WTC11 (cell line): ENCODE measurements at regions of chr3 and their contacts with region 1.

Region 1: GRCh38 chr3:14548321-14548729 is 8.2 kb upstream of the GRIP2 start:
- DNase-seq: peak; percentile 73
- ATAC-seq: peak; percentile 91
- H3K4me3 Mint-ChIP-seq: no peak overlapping the region
- H3K27ac Mint-ChIP-seq: no peak overlapping the region
- H3K4me1 Mint-ChIP-seq: peaks cover 5% of the 10 kb centered on the region; the same call in 1 of the 2 replicates
- H3K27me3 Mint-ChIP-seq: no peaks in the 10 kb centered on the region; the same call in 1 of the 2 replicates
- CTCF ChIP-seq: peak; percentile 56; the same call in 1 of the 2 replicates

Region 2: DNA sequence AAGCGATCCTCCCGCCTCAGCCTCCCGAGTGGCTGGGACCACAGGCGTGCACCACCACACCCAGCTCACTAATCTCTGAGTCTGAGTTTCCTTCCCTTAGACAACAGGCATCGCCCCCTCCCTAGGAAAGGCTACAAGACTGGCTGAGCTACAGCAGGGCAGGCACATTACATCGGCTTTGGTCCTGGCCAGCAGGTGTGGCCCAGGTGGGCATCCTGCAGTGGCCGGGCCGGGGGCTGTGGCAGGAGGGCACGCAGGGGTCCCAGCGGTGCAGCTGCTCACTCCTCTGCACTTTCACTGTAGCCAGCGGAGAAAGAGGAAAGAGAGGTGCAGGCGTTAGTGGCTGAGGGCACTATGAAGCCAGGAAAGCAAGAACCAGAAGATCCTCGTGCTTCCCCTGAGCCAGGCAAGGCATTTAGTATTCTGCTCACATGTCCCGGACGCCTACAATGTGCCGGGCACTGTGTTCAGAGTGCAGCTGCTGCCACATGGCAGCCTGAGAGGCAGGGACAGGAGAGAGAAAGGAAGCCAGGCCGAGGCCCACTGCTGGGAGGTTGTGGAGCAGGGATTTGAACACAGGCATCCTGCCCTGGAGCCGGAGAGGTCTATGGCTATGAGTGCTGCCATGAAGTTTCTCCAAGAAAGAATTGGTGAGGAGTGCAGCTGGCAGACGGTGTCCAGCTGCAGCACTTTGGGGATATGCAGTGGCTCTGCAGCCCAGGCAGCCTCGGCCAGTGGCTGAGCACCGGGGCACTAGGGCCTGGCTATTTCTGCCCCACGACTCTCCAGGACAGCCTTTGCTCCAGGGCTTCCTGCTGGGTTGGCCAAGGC is 30.5 kb before region 1 on chr3:
- CTCF ChIA-PET with region 1: interaction called, 36 read pairs
- POLR2A ChIA-PET with region 1: no interaction called
- DNase-seq: no peak
- ATAC-seq: no peak
- H3K4me3 Mint-ChIP-seq: no peak overlapping the region
- H3K27ac Mint-ChIP-seq: no peak overlapping the region
- H3K4me1 Mint-ChIP-seq: no peaks in the 10 kb centered on the region
- H3K27me3 Mint-ChIP-seq: no peaks in the 10 kb centered on the region
- CTCF ChIP-seq: no peak

Region 3: DNA sequence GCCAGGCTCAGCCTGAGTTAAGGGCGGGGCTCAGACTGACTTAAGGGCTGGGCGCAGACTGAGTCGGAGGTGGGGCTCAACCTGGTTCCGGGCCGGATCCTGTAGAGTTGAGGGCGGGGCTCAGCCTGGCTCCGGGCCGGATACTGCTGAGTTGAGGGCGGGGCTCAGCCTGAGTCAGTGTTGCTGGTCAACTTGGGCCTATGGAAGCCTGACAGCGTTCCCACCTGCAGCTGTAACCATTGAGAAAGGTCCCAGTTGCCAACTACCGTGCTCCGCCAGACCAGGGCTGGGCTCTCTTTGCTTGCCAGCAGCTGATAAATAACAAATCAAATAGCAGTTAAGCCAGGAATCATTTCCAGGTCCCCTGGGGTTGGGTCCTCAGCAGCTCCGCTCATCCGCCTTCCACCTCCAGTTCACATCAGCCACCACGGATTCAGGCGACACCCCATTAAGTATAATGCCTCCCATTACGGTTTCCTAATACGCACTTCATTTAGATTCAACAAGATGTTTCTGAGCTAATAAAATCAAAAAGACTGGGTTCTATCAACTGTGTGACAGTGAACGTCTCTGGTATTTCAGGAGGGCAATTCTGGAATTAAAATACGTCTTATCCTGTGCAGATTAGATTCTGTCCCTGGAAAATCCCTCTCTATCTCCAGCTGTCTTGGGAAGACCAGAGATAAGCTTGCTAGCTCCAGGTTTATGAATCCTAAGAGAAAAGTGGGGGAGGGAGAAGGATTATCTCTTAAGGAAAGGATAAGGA is 15.5 kb before region 1 on chr3:
- CTCF ChIA-PET with region 1: interaction called, 105 read pairs
- POLR2A ChIA-PET with region 1: no interaction called
- DNase-seq: peak; percentile 91
- ATAC-seq: peak; percentile 94
- H3K4me3 Mint-ChIP-seq: peak overlapping the region; percentile 33; the same call in 1 of the 2 replicates
- H3K27ac Mint-ChIP-seq: peak overlapping the region; percentile 86
- H3K4me1 Mint-ChIP-seq: peaks cover 53% of the 10 kb centered on the region
- H3K27me3 Mint-ChIP-seq: no peaks in the 10 kb centered on the region; the same call in 1 of the 2 replicates
- CTCF ChIP-seq: no peak

Region 4: DNA sequence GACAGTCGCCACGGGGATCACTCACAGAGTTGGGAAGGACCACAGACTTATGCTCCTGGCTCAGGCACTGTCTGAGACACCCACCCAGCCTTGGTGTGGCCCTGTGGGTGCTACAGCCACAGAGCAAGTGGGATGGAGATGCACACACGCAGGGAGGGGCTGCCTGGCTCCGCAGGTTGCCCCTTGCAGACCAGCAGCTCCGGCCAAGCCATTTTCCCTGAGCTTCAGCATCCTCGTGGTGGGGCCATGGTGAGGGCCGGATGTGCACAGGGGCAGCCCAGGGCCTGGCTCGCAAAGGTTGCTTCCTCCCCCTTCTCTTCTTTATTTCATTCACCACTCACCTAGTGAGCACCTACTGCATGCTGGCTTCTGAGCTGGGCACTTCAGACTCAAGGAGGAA is 47.2 kb after region 1 on chr3:
- CTCF ChIA-PET with region 1: interaction called, 12 read pairs
- POLR2A ChIA-PET with region 1: no interaction called
- DNase-seq: no peak
- ATAC-seq: no peak
- H3K4me3 Mint-ChIP-seq: no peak overlapping the region
- H3K27ac Mint-ChIP-seq: no peak overlapping the region
- H3K4me1 Mint-ChIP-seq: peaks cover 6% of the 10 kb centered on the region
- H3K27me3 Mint-ChIP-seq: no peaks in the 10 kb centered on the region
- CTCF ChIP-seq: no peak

Region 5: GRCh38 chr3:14645453-14645852 is 97.1 kb after region 1 on chr3:
- CTCF ChIA-PET with region 1: no interaction called
- POLR2A ChIA-PET with region 1: no interaction called
- DNase-seq: no peak
- ATAC-seq: no peak
- H3K4me3 Mint-ChIP-seq: no peak overlapping the region
- H3K27ac Mint-ChIP-seq: no peak overlapping the region
- H3K4me1 Mint-ChIP-seq: peaks cover under 1% of the 10 kb centered on the region
- H3K27me3 Mint-ChIP-seq: peaks cover 20% of the 10 kb centered on the region
- CTCF ChIP-seq: no peak